Dendritic cell treated with granulocyte-macrophage colony-stimulating factor and Interleukin-4, amounts not matched to agents 40 ng/mL and 50 ng/mL, for 4 days (primary cell): ENCODE measurements at regions of chr12 and their contacts with region 1.

Region 1: GRCh38 chr12:121626087-121626852 is at the start of gene ORAI1:
- H3K4me3 Mint-ChIP-seq: peak within 1 kb of the TSS; percentile 94
- H3K27ac Mint-ChIP-seq: peak within 1 kb of the TSS; percentile 89
- H3K4me1 Mint-ChIP-seq: peaks cover 53% of the 10 kb centered on the region
- H3K27me3 Mint-ChIP-seq: no peaks in the 10 kb centered on the region

Region 2: DNA sequence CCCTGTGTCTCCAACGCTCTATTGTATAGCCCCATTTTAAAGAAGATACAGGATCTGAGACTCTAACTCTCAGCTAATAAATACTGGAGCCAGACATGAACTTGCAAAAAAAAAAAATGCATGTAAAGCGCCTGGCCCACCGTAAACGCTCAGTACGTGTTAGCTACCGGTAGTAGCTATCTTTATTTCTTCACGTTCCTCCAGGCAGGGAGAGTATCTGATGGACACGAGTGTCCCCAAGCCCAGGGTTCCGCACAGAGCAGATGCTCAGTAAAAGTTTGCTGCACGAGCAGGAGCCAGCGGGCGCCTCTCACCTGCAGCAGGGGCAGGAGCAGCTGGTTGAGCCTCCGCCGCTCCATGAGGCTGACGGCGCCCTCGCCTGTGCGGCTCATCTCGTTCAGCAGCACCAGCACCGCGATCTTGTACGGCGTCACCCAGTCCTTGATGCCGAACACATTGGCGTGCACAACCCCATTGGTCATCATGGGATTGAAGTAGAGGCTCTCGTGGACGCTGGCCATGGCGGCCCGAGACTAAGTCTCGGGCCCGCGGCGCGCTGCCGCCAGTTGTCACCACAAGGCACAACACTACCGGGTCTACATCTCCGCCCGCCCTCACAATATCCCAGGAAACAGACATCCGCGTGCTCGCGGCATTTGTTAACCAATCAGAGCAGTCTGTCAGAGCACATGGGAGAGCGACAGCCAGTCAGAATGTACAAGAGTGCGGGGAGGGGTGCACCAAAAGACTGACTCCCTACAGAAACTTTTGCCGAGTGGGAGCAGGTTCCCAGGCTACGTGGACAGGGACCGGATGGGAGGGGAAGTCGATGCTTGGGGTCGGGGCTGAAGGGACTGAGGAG is 274.2 kb before region 1 on chr12 and contains the start of gene ANAPC5:
- intact Hi-C with region 1: no loop called
- H3K4me3 Mint-ChIP-seq: peak within 1 kb of the TSS; percentile 91
- H3K27ac Mint-ChIP-seq: peak within 1 kb of the TSS; percentile 98
- H3K4me1 Mint-ChIP-seq: peaks cover 19% of the 10 kb centered on the region
- H3K27me3 Mint-ChIP-seq: peaks cover under 1% of the 10 kb centered on the region

Region 3: DNA sequence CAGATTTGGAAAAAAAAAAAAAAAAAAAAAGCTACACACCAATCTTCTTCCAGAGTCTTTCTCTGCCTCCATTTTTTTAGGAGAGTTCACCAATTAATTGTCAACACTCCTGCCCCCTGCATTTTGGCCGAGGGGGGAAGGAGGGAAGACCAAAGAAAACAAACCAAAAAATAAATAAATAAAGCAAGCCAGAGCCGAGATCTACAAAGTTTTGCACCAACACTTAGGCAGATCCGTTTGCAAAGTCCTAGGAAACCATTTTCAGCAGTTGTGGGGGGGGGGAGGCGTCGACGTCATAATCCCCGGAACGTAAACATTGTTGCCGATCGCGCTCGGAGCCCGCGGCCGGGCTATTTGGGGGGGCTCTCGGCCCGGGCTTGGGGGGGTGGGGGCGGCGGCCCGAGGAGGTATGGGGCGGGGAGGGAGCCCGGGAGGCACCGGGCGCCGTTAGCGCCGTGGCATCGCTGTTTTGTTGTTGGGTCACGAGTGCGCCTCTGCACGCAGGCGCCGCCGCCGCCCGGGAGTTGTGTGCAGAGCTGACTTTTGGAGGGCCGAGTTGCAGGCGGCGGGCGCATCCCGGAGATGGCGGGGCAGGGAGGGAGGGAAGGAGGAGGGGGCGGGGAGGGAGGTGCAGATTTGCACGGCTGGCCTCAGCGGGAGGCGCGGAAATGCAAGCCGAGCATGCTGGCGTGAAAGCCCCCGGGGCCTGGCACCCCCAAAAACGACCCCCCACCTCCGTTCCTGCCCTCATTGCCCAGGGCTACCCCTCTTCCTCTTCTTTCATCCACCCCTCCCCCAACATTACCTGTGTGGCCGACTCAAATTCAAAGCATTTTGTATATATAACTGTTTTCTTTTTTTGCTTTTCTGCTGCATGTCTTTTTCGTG is 46.0 kb before region 1 on chr12:
- intact Hi-C with region 1: loop called (anchors 5 kb)
- H3K4me3 Mint-ChIP-seq: peak overlapping the region; percentile 86
- H3K27ac Mint-ChIP-seq: peak overlapping the region; percentile 98
- H3K4me1 Mint-ChIP-seq: peaks cover 56% of the 10 kb centered on the region
- H3K27me3 Mint-ChIP-seq: no peaks in the 10 kb centered on the region

Region 4: GRCh38 chr12:121663610-121663929 is 37.3 kb after region 1 on chr12:
- intact Hi-C with region 1: loop called (anchors 5 kb)
- H3K4me3 Mint-ChIP-seq: peak overlapping the region; percentile 90
- H3K27ac Mint-ChIP-seq: peak overlapping the region; percentile 97
- H3K4me1 Mint-ChIP-seq: peaks cover 77% of the 10 kb centered on the region
- H3K27me3 Mint-ChIP-seq: no peaks in the 10 kb centered on the region

Region 5: GRCh38 chr12:121678716-121679580 is 52.7 kb after region 1 on chr12:
- intact Hi-C with region 1: loop called (anchors 5 kb)
- H3K4me3 Mint-ChIP-seq: no peak overlapping the region
- H3K27ac Mint-ChIP-seq: no peak overlapping the region
- H3K4me1 Mint-ChIP-seq: peaks cover 7% of the 10 kb centered on the region
- H3K27me3 Mint-ChIP-seq: no peaks in the 10 kb centered on the region

Region 6: DNA sequence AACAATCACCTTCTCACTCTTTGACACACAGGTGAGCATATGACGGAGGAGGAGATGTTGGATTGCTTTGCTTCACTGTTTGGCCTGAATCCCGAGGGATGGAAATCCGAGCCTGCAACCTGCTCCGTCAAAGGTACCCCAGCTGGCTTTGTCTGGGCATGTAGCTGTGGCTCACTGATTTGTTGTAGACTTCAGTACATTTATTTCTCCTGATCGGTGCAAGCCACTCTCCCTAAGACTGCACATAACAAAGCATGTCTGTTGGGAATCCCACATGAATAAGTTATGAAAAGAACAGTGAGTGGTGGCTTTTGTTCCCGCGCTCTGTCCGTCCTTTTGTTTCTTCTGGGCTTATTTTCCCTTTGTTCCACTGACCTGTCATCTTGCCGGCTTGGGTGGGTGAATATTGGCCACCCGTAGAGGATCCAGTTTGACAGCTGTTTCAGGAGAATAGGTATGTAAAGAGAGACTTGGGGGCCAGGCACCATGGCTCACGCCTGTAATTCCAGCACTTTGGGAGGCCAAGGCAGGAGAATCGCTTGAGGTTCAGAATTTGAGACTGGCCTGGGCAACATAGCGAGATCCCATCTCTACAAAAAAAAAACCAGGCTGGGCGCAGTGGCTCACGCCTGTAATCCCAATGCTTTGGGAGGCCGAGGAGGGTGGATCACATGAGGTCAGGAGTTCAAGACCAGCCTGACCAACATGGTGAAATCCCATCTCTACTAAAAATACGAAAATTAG is 375.4 kb after region 1 on chr12:
- intact Hi-C with region 1: no loop called
- H3K4me3 Mint-ChIP-seq: no peak overlapping the region
- H3K27ac Mint-ChIP-seq: no peak overlapping the region
- H3K4me1 Mint-ChIP-seq: peaks cover 6% of the 10 kb centered on the region
- H3K27me3 Mint-ChIP-seq: peaks cover 35% of the 10 kb centered on the region